ENCODE measurements at regions of chr6 and their contacts with region 1.

Region 1: DNA sequence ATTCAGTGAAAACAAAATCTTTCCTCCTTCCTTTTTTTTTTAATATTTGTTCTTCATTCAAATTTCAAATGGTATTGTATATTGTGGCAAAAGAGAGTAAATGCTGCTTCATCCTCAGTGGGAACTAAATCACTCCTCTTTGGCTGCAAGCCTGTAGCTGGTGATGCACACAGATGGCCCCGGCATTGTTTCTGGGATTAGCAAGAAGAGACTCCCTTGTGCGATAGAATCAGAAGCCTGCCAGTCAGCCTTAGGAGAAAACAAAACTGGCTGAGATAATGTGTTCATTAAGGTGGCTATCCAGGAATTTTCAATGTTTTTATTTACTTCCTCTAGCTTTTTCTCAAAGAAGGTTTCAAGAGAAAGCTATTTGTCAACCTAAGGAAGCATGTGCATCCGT is 20.7 kb upstream of the ELOVL2 start:
- DNase-seq: no peak
- CTCF ChIP-seq: no peak

Region 2: GRCh38 chr6:10886691-10887535 is 177.9 kb before region 1 on chr6 and contains the start of gene SYCP2L:
- CTCF ChIA-PET with region 1: no interaction called
- POLR2A ChIA-PET with region 1: no interaction called
- DNase-seq: peak; percentile 40
- CTCF ChIP-seq: peak; percentile 8

Region 3: DNA sequence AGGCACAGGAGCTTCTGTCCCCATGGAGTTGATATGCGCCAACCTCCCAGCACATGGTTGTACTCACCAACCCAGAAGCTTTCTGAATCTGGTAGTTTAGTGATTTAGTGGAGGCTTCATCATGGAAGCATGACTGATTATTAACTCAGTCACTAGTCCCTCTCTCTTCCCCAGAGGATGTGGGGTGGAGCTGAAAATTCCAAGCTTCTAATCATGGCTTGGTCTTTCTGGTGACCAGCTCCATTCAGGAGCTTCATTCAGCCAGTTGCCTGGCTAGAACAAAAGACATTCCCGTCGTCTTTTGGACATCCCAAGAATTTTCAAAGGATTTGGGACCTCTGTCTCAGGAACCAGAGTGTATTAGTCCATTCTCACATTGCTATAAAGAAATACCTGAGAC is 15.5 kb after region 1 on chr6:
- CTCF ChIA-PET with region 1: interaction called, 23 read pairs
- POLR2A ChIA-PET with region 1: no interaction called
- DNase-seq: no peak
- CTCF ChIP-seq: no peak

Region 4: GRCh38 chr6:11093589-11094410 is 29.0 kb after region 1 on chr6 and contains the start of gene SMIM13:
- CTCF ChIA-PET with region 1: interaction called, 16 read pairs
- POLR2A ChIA-PET with region 1: no interaction called
- DNase-seq: peak; percentile 97
- CTCF ChIP-seq: peak; percentile 64

Region 5: DNA sequence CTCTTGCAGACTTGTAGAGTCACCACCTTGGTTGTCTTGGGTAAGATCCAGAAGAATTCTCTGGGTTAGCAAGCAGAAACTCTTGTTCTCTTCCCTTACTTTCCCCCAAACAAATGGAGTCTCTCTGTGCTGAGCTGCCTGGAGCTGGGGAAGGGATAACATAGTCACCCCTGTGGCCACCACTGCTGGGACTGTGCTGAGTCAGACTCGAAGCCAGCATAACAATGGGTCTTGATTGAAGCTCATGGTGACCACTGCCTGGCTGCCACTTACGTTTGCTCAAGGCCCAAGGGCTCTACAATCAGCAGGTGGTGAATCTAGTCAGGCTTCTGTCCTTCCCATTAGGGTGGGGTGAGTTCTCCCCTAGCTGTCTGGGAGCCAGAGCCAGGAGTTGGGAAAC is 62.0 kb after region 1 on chr6:
- CTCF ChIA-PET with region 1: no interaction called
- POLR2A ChIA-PET with region 1: no interaction called
- DNase-seq: no peak
- CTCF ChIP-seq: no peak